ENCODE measurements at regions of chr15 and their contacts with region 1.

Region 1: DNA sequence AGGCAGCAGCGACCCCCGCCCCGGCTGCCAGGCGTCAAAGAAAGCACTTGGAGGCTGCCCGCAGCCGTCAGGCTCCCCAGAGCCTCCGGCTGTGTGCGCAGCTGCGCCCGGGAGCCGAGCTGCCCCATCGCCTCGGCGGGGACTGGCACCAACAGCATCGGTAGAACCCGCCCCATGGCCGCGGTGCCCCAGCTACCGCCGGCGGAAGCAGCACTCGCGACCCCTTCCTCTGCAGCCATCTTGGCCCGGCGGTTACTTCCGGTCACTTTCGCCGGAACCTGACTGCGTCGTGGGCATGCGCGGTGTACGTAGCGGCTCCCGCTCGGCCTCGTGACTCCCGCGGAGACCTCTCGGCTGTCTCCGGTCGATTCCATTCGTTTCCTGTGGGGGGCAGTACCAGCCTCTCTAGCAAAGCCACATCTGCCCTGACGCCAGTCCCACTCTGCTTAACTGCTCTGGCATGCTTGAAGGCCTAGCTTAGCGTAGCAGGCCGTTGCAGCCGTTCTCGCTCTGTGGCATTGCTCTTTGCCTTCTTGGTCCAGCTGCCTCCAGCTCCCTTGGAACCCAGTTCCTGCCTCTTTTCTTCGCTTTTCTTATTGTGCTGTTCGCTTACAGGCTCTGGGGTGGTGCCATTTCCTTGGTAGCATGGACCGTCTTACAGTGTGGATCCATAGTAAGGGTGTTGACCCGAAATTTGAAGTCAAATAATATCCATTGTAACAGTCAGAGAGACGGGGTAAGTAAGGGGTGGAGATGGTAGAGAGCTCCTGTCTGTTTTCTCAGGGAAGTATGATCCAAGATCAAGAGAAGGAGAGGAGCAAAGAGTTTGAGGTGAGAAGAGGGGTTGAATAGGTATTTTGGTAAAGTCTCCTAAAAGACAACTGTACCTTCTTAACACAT is at the start of gene SPG11:
- DNase-seq: peak; percentile 99
- ATAC-seq: peak; percentile 83
- H3K4me3 Mint-ChIP-seq: peak within 1 kb of the TSS; percentile 96
- H3K27ac Mint-ChIP-seq: peak within 1 kb of the TSS; percentile 98
- H3K4me1 Mint-ChIP-seq: peaks cover 57% of the 10 kb centered on the region
- H3K27me3 Mint-ChIP-seq: no peaks in the 10 kb centered on the region
- total RNA-seq, gene SPG11: 76.2 to 88.7 TPM

Region 2: GRCh38 chr15:44570361-44570760 is 93.3 kb before region 1 on chr15:
- CTCF ChIA-PET with region 1: no interaction called
- POLR2A ChIA-PET with region 1: no interaction called
- intact Hi-C with region 1: no loop called
- DNase-seq: no peak
- ATAC-seq: no peak
- H3K4me3 Mint-ChIP-seq: no peak overlapping the region
- H3K27ac Mint-ChIP-seq: peak overlapping the region; percentile 37
- H3K4me1 Mint-ChIP-seq: no peaks in the 10 kb centered on the region
- H3K27me3 Mint-ChIP-seq: no peaks in the 10 kb centered on the region

Region 3: GRCh38 chr15:44593042-44593736 is 70.5 kb before region 1 on chr15:
- CTCF ChIA-PET with region 1: interaction called, 7 read pairs
- POLR2A ChIA-PET with region 1: no interaction called
- intact Hi-C with region 1: loop called (anchors 2 kb)
- DNase-seq: peak; percentile 20
- ATAC-seq: peak; percentile 79
- H3K4me3 Mint-ChIP-seq: no peak overlapping the region
- H3K27ac Mint-ChIP-seq: peak overlapping the region; percentile 25
- H3K4me1 Mint-ChIP-seq: peaks cover 27% of the 10 kb centered on the region
- H3K27me3 Mint-ChIP-seq: no peaks in the 10 kb centered on the region

Region 4: DNA sequence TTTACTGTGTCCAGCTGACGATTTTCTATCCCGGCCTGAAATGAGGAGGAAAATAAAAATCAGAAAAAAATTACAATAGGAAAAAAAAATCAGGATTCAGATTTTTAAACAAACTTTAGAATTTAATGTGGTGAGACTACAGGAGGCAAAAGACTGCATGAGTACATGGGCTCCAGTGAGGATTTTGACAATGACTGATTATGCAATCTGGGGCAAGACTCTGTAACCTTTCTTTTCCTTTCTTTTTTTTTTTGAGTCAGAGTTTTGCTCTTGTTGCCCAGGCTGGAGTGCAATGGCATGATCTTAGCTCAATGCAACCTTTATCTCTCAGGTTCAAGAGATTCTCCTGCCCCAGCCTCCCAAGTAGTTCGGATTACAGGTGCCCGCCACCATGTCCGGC is 30.1 kb before region 1 on chr15:
- CTCF ChIA-PET with region 1: interaction called, 8 read pairs
- POLR2A ChIA-PET with region 1: interaction called, 7 read pairs
- intact Hi-C with region 1: loop called (anchors 1 to 2 kb)
- DNase-seq: peak; percentile 13
- ATAC-seq: peak; percentile 77
- H3K4me3 Mint-ChIP-seq: peak overlapping the region; percentile 65
- H3K27ac Mint-ChIP-seq: peak overlapping the region; percentile 98
- H3K4me1 Mint-ChIP-seq: peaks cover 26% of the 10 kb centered on the region
- H3K27me3 Mint-ChIP-seq: no peaks in the 10 kb centered on the region

Region 5: DNA sequence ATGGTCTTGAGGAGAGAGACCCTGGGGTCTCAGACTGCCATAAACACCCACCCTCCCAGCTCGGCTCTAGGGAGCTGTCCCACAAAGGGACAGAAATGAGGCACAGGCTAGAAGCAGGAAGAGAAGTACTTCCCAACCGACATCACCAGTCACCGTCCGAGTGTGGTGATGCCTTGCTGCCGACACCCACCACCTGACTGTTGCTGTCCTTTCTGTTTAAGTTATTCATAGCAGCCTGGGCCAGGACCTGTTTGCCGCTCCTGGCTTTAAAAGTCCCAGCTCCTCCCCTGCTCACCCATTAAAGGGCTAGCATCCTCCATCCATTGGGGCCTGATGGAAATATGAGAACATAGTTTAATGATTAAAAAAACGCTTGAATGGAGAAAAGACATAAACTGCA is 13.0 kb after region 1 on chr15:
- CTCF ChIA-PET with region 1: interaction called, 35 read pairs
- POLR2A ChIA-PET with region 1: interaction called, 5 read pairs
- intact Hi-C with region 1: loop called in 1 of 2 experiments (anchors 1 kb)
- DNase-seq: peak; percentile 67
- ATAC-seq: peak; percentile 68
- H3K4me3 Mint-ChIP-seq: peak overlapping the region; percentile 41
- H3K27ac Mint-ChIP-seq: peak overlapping the region; percentile 89
- H3K4me1 Mint-ChIP-seq: peaks cover 83% of the 10 kb centered on the region
- H3K27me3 Mint-ChIP-seq: no peaks in the 10 kb centered on the region

Region 6: GRCh38 chr15:44682211-44682610 is 18.6 kb after region 1 on chr15:
- CTCF ChIA-PET with region 1: interaction called, 35 read pairs
- POLR2A ChIA-PET with region 1: interaction called, 17 read pairs
- intact Hi-C with region 1: loop called in 1 of 2 experiments (anchors 2 kb)
- DNase-seq: no peak
- ATAC-seq: peak; percentile 75
- H3K4me3 Mint-ChIP-seq: peak overlapping the region; percentile 50
- H3K27ac Mint-ChIP-seq: peak overlapping the region; percentile 92
- H3K4me1 Mint-ChIP-seq: peaks cover 72% of the 10 kb centered on the region
- H3K27me3 Mint-ChIP-seq: no peaks in the 10 kb centered on the region

Region 7: DNA sequence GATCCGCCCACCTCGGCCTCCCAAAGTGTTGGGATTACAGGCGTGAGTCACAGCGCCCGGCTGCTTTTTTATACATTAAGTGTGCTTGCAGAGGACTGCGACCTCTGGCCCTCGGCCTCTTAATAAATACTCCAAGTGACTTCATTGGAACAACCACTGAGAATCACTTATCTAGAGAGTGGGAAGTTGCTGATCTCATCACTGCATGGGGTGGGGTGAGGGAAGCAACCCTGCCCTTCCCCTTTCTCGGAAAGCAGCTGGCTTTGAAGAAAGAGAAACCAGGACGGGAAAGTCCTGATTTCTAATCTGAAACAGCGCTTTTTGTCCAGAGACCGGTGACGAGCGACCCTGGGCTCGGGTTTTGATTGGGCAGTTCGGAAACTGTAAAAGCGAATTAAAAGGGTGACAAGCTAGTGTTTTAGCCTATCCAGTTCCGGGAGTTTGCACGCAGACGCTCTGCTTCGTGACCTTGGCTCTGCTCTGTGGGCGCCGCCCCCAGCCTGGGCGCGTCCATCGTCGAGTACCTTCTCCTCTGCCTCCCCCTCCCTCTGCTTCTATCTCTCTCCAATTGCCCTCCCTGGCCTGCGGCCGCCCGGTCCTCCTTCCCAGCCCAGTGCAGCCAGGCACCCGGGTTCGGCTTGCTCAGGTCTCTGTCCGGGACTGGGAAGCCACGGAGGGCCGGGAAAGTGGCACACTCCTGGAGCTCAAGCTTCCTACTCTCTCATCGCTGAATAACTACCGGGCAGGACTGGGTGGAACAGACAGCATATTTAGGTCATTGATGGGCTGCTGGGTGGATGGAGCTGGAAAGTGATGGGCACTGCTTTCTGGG is 65.1 kb after region 1 on chr15:
- CTCF ChIA-PET with region 1: interaction called, 209 read pairs
- POLR2A ChIA-PET with region 1: interaction called, 102 read pairs
- intact Hi-C with region 1: loop called (anchors 1 kb)
- DNase-seq: peak; percentile 96
- ATAC-seq: peak; percentile 78
- H3K4me3 Mint-ChIP-seq: peak overlapping the region; percentile 91
- H3K27ac Mint-ChIP-seq: peak overlapping the region; percentile 99
- H3K4me1 Mint-ChIP-seq: peaks cover 68% of the 10 kb centered on the region
- H3K27me3 Mint-ChIP-seq: no peaks in the 10 kb centered on the region

Region 8: GRCh38 chr15:44812029-44812517 is 148.4 kb after region 1 on chr15:
- CTCF ChIA-PET with region 1: no interaction called
- POLR2A ChIA-PET with region 1: no interaction called
- intact Hi-C with region 1: no loop called
- DNase-seq: no peak
- ATAC-seq: no peak
- H3K4me3 Mint-ChIP-seq: no peak overlapping the region
- H3K27ac Mint-ChIP-seq: no peak overlapping the region
- H3K4me1 Mint-ChIP-seq: peaks cover 2% of the 10 kb centered on the region
- H3K27me3 Mint-ChIP-seq: no peaks in the 10 kb centered on the region

Measured in activated CD4-positive, alpha-beta T cell treated with anti-CD3 and anti-CD28 coated beads for 36 hours (primary cell).